ENCODE measurements at regions of chr5 and their contacts with region 1.

Region 1: GRCh38 chr5:80083101-80083890 is 48.1 kb downstream of the THBS4 start:
- DNase-seq: peak; percentile 40
- ATAC-seq: peak; percentile 82
- H3K4me3 Mint-ChIP-seq: peak overlapping the region; percentile 41
- H3K27ac Mint-ChIP-seq: peak overlapping the region; percentile 76
- H3K4me1 Mint-ChIP-seq: peaks cover 12% of the 10 kb centered on the region
- H3K27me3 Mint-ChIP-seq: no peaks in the 10 kb centered on the region

Region 2: DNA sequence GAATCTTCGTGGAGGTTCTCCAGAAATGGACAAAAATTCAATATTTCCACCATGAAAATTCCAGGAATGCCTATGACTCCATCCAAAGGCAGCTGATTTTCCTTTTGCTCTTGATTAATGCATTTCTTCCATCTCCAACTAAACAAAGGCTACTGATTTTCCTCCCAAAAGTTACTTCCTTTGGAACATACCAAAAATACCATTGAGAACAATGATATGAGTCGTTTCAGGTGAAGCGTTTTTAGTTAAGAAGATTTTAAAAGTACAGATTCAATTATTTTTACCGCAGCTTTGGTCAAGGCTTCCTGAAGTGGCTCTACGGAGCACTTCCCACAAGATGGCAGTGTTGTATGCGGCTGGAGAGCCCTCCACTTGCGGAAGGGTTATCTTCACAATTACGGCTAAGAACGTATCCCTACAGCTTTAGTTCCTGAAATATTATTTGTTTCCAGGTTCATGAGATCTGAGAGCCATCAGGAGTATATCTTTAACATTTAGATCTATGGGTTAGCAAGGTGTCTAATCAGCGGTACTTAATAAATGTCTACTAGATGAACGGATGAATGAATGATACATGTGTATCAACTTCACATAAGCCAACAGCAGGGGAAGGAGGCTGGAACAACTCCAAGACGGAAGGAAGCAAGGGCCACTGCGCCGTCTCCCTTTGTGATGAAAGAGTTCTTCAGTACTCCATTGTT is 1062.3 kb before region 1 on chr5:
- CTCF ChIA-PET with region 1: interaction called, 3 read pairs
- POLR2A ChIA-PET with region 1: no interaction called
- intact Hi-C with region 1: loop called in 1 of 2 experiments (anchors 2 kb)
- DNase-seq: peak; percentile 70
- ATAC-seq: no peak
- H3K4me3 Mint-ChIP-seq: no peak overlapping the region
- H3K27ac Mint-ChIP-seq: no peak overlapping the region
- H3K4me1 Mint-ChIP-seq: peaks cover 2% of the 10 kb centered on the region
- H3K27me3 Mint-ChIP-seq: peaks cover 33% of the 10 kb centered on the region

Region 3: GRCh38 chr5:79702606-79703382 is 380.5 kb before region 1 on chr5:
- CTCF ChIA-PET with region 1: interaction called, 10 read pairs
- POLR2A ChIA-PET with region 1: no interaction called
- intact Hi-C with region 1: loop called (anchors 2 kb)
- DNase-seq: peak; percentile 62
- ATAC-seq: no peak
- H3K4me3 Mint-ChIP-seq: no peak overlapping the region
- H3K27ac Mint-ChIP-seq: no peak overlapping the region
- H3K4me1 Mint-ChIP-seq: peaks cover 15% of the 10 kb centered on the region
- H3K27me3 Mint-ChIP-seq: no peaks in the 10 kb centered on the region

Region 4: GRCh38 chr5:79878721-79879336 is 204.5 kb before region 1 on chr5:
- CTCF ChIA-PET with region 1: interaction called, 34 read pairs
- POLR2A ChIA-PET with region 1: no interaction called
- intact Hi-C with region 1: loop called (anchors 1 kb)
- DNase-seq: peak; percentile 70
- ATAC-seq: peak; percentile 70
- H3K4me3 Mint-ChIP-seq: no peak overlapping the region
- H3K27ac Mint-ChIP-seq: no peak overlapping the region
- H3K4me1 Mint-ChIP-seq: no peaks in the 10 kb centered on the region
- H3K27me3 Mint-ChIP-seq: peaks cover 1% of the 10 kb centered on the region

Region 5: GRCh38 chr5:79962575-79963222 is 120.6 kb before region 1 on chr5:
- CTCF ChIA-PET with region 1: interaction called, 6 read pairs
- POLR2A ChIA-PET with region 1: no interaction called
- intact Hi-C with region 1: loop called in 1 of 2 experiments (anchors 1 kb)
- DNase-seq: peak; percentile 83
- ATAC-seq: peak; percentile 89
- H3K4me3 Mint-ChIP-seq: peak overlapping the region; percentile 15
- H3K27ac Mint-ChIP-seq: peak overlapping the region; percentile 93
- H3K4me1 Mint-ChIP-seq: peaks cover 32% of the 10 kb centered on the region
- H3K27me3 Mint-ChIP-seq: peaks cover 14% of the 10 kb centered on the region

Region 6: DNA sequence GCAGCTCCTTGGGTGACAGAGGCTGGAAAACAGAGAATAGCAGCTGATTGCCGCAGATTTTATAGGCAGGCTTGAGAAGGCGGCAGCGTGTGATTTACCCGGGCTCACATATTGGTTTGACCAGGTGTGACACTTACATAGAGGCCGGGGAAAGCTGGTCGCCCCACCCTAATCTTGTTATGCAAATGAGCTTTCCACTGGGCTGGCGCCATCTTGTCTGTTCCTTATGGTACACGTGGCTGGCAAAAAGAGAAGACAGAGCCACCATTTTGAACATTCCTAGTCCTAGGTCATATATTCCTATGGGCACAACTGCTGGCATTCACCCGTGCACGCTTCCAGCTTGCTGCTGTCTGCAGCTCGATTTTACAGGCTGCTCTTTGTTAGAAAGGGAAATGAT is 225.2 kb after region 1 on chr5:
- CTCF ChIA-PET with region 1: interaction called, 198 read pairs
- POLR2A ChIA-PET with region 1: no interaction called
- intact Hi-C with region 1: no loop called
- DNase-seq: no peak
- ATAC-seq: no peak
- H3K4me3 Mint-ChIP-seq: no peak overlapping the region
- H3K27ac Mint-ChIP-seq: no peak overlapping the region
- H3K4me1 Mint-ChIP-seq: no peaks in the 10 kb centered on the region
- H3K27me3 Mint-ChIP-seq: no peaks in the 10 kb centered on the region